ENCODE measurements at regions of chr22 and their contacts with region 1.

Region 1: DNA sequence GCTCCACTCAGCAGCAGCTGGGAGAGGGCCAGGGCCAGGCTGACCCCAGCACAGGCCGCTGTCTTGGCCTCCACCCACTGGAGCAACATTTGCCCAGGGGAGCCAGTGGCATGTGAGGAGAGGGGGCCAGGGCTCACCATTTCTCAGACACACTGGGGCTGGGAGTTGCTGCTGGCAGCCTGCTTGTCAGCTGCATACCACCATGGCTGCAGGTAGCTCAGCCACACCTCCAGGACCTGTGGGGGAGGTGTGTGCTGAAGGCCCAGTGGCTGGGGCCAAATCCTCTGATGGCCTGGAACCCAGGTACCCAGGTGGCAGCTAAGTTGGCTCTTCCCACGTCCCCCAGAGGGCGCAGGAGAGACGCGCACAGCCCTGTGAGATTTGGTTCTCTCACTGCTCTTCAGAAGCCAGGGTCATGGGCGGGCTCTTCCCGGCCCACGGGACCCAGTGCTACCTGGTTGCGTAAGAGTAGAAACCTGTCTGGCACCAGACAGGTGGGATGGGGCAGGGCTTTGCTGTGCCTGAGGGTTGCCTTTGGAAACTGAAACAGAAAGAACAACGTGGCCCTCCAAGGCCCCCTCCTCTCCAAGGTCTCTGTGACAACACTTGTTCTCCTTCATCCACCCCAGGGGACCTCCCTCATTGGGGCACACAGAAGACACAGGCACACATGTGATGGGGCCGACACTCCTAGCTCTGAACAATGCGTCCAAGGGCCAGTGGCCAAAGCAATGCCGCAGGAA is 98.8 kb downstream of the MED15 start:
- DNase-seq: no peak
- ATAC-seq: peak; percentile 92
- H3K4me3 ChIP-seq: no peak overlapping the region
- H3K27ac ChIP-seq: no peak overlapping the region
- H3K4me1 ChIP-seq: peaks cover 18% of the 10 kb centered on the region
- H3K27me3 ChIP-seq: no peaks in the 10 kb centered on the region
- CTCF ChIP-seq: peak; percentile 90 to 97 (median 90)
- EP300 ChIP-seq: no peak
- POLR2A ChIP-seq: no peak
- RAD21 ChIP-seq: peak; percentile 93

Region 2: DNA sequence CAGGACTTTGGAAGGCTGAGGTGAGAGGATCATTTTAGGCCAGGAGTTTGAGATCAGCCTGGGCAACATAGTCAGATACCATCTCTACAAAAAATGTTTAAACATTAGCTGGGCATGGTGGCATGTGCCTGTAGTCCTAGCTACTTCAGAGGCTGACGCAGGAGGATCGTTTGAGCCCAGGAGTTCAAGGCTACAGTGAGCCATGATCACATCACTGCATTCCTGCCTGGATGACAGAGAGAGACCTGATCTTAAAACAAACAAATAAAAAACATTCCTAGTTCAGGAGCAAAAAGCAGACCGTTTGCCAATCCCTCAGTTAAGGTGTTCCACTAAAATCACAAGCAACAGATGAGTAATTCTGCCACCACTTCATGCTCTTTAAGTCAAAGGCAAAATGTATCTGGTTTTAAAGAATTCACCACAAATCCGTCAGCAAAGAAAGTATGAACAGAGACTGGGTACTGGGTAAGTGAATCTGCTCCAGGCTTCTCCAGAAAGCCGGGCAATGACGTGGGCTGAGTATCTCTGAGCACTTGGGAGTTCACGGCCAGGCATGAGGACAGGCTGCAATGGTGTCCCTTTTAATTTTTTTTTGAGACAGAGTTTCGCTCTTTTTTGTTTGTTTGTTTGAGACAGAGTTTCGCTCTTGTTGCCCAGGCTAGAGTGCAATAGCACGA is 1334.2 kb before region 1 on chr22:
- CTCF ChIA-PET with region 1: no interaction called
- POLR2A ChIA-PET with region 1: no interaction called
- RAD21 ChIA-PET with region 1: no interaction called
- SMC1A ChIA-PET with region 1: no interaction called
- in situ Hi-C with region 1: no loop called
- intact Hi-C with region 1: no loop called
- DNase-seq: no peak
- ATAC-seq: no peak
- H3K4me3 ChIP-seq: no peak overlapping the region
- H3K27ac ChIP-seq: no peak overlapping the region
- H3K4me1 ChIP-seq: no peaks in the 10 kb centered on the region
- H3K27me3 ChIP-seq: 0 out of 4 replicates have a peak, but pooled peaks cover 0 to 1% of the 10 kb centered on the region in 2 experiments
- CTCF ChIP-seq: no peak
- EP300 ChIP-seq: no peak
- POLR2A ChIP-seq: no peak
- RAD21 ChIP-seq: no peak

Region 3: GRCh38 chr22:20624161-20624616 is 18.0 kb after region 1 on chr22:
- CTCF ChIA-PET with region 1: interaction called, 10 read pairs
- POLR2A ChIA-PET with region 1: no interaction called
- RAD21 ChIA-PET with region 1: interaction called, 10 read pairs
- SMC1A ChIA-PET with region 1: interaction called, 6 read pairs
- in situ Hi-C with region 1: no loop called
- intact Hi-C with region 1: loop called (anchors 2 kb)
- DNase-seq: peak; percentile 85
- ATAC-seq: peak; percentile 89
- H3K4me3 ChIP-seq: no peak overlapping the region
- H3K27ac ChIP-seq: peak overlapping the region; percentile 89
- H3K4me1 ChIP-seq: peaks cover 34% of the 10 kb centered on the region
- H3K27me3 ChIP-seq: no peaks in the 10 kb centered on the region
- CTCF ChIP-seq: no peak
- EP300 ChIP-seq: peak; percentile 66 to 86; a peak in 3 of 4 replicates
- POLR2A ChIP-seq: no peak
- RAD21 ChIP-seq: peak; percentile 5; the same call in 1 of the 2 replicates

Region 4: GRCh38 chr22:20741634-20742581 is 135.7 kb after region 1 on chr22:
- CTCF ChIA-PET with region 1: interaction called, 12 read pairs
- POLR2A ChIA-PET with region 1: no interaction called
- RAD21 ChIA-PET with region 1: interaction called, 3 read pairs
- SMC1A ChIA-PET with region 1: no interaction called
- in situ Hi-C with region 1: no loop called
- intact Hi-C with region 1: loop called (anchors 5 kb)
- DNase-seq: no peak
- ATAC-seq: peak; percentile 61
- H3K4me3 ChIP-seq: no peak overlapping the region
- H3K27ac ChIP-seq: no peak overlapping the region
- H3K4me1 ChIP-seq: peaks cover 8% of the 10 kb centered on the region
- H3K27me3 ChIP-seq: no peaks in the 10 kb centered on the region
- CTCF ChIP-seq: peak; percentile 59 to 81 (median 66)
- EP300 ChIP-seq: no peak
- POLR2A ChIP-seq: no peak
- RAD21 ChIP-seq: peak; percentile 62

Measured in GM12878 (cell line).